ENCODE measurements at regions of chr3 and their contacts with region 1.

Region 1: GRCh38 chr3:16433701-16434151 is 79.8 kb downstream of the RFTN1 start:
- DNase-seq: peak; percentile 84
- ATAC-seq: peak; percentile 70
- H3K4me3 ChIP-seq: no peak overlapping the region
- H3K4me3 Mint-ChIP-seq: peak overlapping the region; percentile 84
- H3K27ac ChIP-seq: peak overlapping the region in 1 of 2 donors; percentile 3
- H3K27ac Mint-ChIP-seq: peak overlapping the region; percentile 85
- H3K4me1 ChIP-seq: peaks cover 45 to 51% of the 10 kb centered on the region in 2 donors
- H3K4me1 Mint-ChIP-seq: peaks cover 56% of the 10 kb centered on the region
- H3K27me3 ChIP-seq: peaks cover 0 to 5% (median 0%) of the 10 kb centered on the region in 4 experiments
- H3K27me3 Mint-ChIP-seq: peaks cover 6% of the 10 kb centered on the region
- CTCF ChIP-seq: no peak

Region 2: GRCh38 chr3:15964605-15965442 is 468.9 kb before region 1 on chr3:
- CTCF ChIA-PET with region 1: no interaction called
- POLR2A ChIA-PET with region 1: no interaction called
- intact Hi-C with region 1: no loop called
- DNase-seq: no peak
- ATAC-seq: no peak
- H3K4me3 ChIP-seq: no peak overlapping the region
- H3K4me3 Mint-ChIP-seq: no peak overlapping the region
- H3K27ac ChIP-seq: no peak overlapping the region
- H3K27ac Mint-ChIP-seq: no peak overlapping the region
- H3K4me1 ChIP-seq: no peaks in the 10 kb centered on the region
- H3K4me1 Mint-ChIP-seq: no peaks in the 10 kb centered on the region
- H3K27me3 ChIP-seq: no peaks in the 10 kb centered on the region
- H3K27me3 Mint-ChIP-seq: no peaks in the 10 kb centered on the region
- CTCF ChIP-seq: no peak

Region 3: GRCh38 chr3:16370872-16371740 is 62.6 kb before region 1 on chr3:
- CTCF ChIA-PET with region 1: interaction called, 6 read pairs
- POLR2A ChIA-PET with region 1: interaction called, 4 read pairs
- intact Hi-C with region 1: loop called (anchors 1 kb)
- DNase-seq: peak; percentile 77
- ATAC-seq: peak; percentile 53
- H3K4me3 ChIP-seq: peak overlapping the region in 1 of 5 experiments; percentile 15
- H3K4me3 Mint-ChIP-seq: peak overlapping the region; percentile 66
- H3K27ac ChIP-seq: peak overlapping the region; percentile 62 to 87
- H3K27ac Mint-ChIP-seq: peak overlapping the region; percentile 91
- H3K4me1 ChIP-seq: peaks cover 75 to 77% of the 10 kb centered on the region in 2 donors
- H3K4me1 Mint-ChIP-seq: peaks cover 73% of the 10 kb centered on the region
- H3K27me3 ChIP-seq: no peaks in the 10 kb centered on the region
- H3K27me3 Mint-ChIP-seq: no peaks in the 10 kb centered on the region
- CTCF ChIP-seq: no peak

Region 4: GRCh38 chr3:16467393-16467792 is 33.7 kb after region 1 on chr3:
- CTCF ChIA-PET with region 1: no interaction called
- POLR2A ChIA-PET with region 1: no interaction called
- intact Hi-C with region 1: loop called (anchors 5 kb)
- DNase-seq: peak; percentile 84
- ATAC-seq: peak; percentile 95
- H3K4me3 ChIP-seq: peak overlapping the region in 2 of 5 experiments; percentile 20 to 51
- H3K4me3 Mint-ChIP-seq: peak overlapping the region; percentile 82
- H3K27ac ChIP-seq: peak overlapping the region in 1 of 2 donors; percentile 73
- H3K27ac Mint-ChIP-seq: peak overlapping the region; percentile 82
- H3K4me1 ChIP-seq: peaks cover 39 to 46% of the 10 kb centered on the region in 2 donors
- H3K4me1 Mint-ChIP-seq: peaks cover 55% of the 10 kb centered on the region
- H3K27me3 ChIP-seq: no peaks in the 10 kb centered on the region
- H3K27me3 Mint-ChIP-seq: no peaks in the 10 kb centered on the region
- CTCF ChIP-seq: no peak

Region 5: DNA sequence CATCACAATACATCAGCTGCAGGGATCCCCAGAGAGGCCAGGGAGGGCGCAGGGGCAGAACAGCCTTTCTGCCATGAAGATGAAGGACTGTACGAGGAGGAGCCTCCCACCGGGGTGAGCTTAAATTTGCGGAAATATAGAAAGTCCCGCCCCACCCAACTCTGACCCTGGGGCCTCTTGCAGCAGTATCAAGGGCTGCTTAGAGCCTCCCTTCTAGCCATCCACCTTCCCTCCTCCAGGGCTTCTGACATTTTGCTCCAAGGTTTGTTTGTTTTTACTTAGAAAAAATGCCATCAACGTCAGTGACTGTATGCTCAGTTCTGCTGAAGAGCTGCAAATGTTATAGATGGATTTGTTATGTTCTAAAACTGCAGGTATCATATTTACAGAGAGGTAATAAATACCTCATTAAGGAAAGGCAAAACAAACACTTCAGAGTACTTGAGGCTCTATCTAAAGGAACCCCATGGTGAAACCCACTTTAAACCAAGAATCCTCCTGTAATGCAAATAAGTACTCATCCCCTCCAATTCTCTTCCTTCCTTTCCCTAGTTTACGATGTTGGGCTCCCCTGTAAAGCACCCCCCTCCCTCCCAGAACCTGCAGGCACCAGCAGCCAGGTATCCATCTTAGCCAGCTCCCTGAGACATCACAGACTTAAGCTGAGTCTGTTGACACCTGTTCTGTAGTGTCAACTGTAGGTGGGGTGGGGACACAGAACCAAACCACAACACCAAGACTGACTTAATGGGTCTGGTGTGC is 49.2 kb after region 1 on chr3:
- CTCF ChIA-PET with region 1: no interaction called
- POLR2A ChIA-PET with region 1: interaction called, 7 read pairs
- intact Hi-C with region 1: loop called (anchors 5 kb)
- DNase-seq: peak; percentile 82
- ATAC-seq: peak; percentile 93
- H3K4me3 ChIP-seq: peak overlapping the region in 4 of 5 experiments; percentile 18 to 38 (median 31)
- H3K4me3 Mint-ChIP-seq: peak overlapping the region; percentile 65
- H3K27ac ChIP-seq: peak overlapping the region; percentile 64 to 74
- H3K27ac Mint-ChIP-seq: peak overlapping the region; percentile 74
- H3K4me1 ChIP-seq: peaks cover 63 to 75% of the 10 kb centered on the region in 2 donors
- H3K4me1 Mint-ChIP-seq: peaks cover 79% of the 10 kb centered on the region
- H3K27me3 ChIP-seq: no peaks in the 10 kb centered on the region
- H3K27me3 Mint-ChIP-seq: no peaks in the 10 kb centered on the region
- CTCF ChIP-seq: no peak

Region 6: GRCh38 chr3:16723978-16724377 is 290.3 kb after region 1 on chr3:
- CTCF ChIA-PET with region 1: no interaction called
- POLR2A ChIA-PET with region 1: no interaction called
- intact Hi-C with region 1: no loop called
- DNase-seq: no peak
- ATAC-seq: no peak
- H3K4me3 ChIP-seq: no peak overlapping the region
- H3K4me3 Mint-ChIP-seq: no peak overlapping the region
- H3K27ac ChIP-seq: no peak overlapping the region
- H3K27ac Mint-ChIP-seq: no peak overlapping the region
- H3K4me1 ChIP-seq: no peaks in the 10 kb centered on the region
- H3K4me1 Mint-ChIP-seq: no peaks in the 10 kb centered on the region
- H3K27me3 ChIP-seq: no peaks in the 10 kb centered on the region
- H3K27me3 Mint-ChIP-seq: peaks cover 5% of the 10 kb centered on the region
- CTCF ChIP-seq: no peak